T-cell (primary cell): ENCODE measurements at regions of chr5 and their contacts with region 1.

Region 1: DNA sequence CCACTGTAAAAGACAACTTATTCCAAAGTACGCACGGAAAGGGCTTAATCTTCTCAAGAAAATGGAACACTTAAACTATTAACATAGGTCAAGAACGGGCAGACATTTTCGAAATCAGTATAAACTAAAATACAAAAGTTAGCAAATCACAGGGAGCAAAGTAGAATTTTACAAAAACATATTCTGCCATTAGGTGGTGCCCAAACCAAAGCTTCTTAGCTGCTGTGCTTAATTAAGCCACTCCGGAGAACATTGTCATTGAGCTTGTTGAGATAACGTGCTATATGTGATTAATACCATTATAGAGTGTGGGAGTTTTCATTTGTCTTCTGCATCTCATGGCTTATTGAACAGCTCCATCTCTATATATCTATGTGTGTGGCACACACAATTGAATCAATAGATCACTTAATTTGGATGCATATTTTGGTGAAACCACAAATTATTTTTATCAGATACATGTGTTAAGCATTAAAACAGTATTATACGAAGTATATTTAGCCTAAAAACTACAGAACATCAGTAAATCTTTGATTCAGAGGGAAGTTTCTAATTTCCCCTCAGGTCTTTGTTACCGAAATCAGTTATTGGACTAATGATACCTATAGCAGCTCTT is 23.4 kb downstream of the UBLCP1 start:
- DNase-seq: peak in 4 of 35 experiments; percentile 5 to 63 (median 8)
- ATAC-seq: peak in 2 of 4 experiments; percentile 43 to 55
- H3K4me3 ChIP-seq: no peak overlapping the region
- H3K4me3 Mint-ChIP-seq: no peak overlapping the region
- H3K27ac ChIP-seq: no peak overlapping the region
- H3K27ac Mint-ChIP-seq: no peak overlapping the region
- H3K4me1 ChIP-seq: no peaks in the 10 kb centered on the region
- H3K4me1 Mint-ChIP-seq: no peaks in the 10 kb centered on the region
- H3K27me3 ChIP-seq: no peaks in the 10 kb centered on the region
- H3K27me3 Mint-ChIP-seq: no peaks in the 10 kb centered on the region

Region 2: GRCh38 chr5:159098603-159099436 is 187.7 kb before region 1 on chr5:
- CTCF ChIA-PET with region 1: no interaction called
- POLR2A ChIA-PET with region 1: no interaction called
- DNase-seq: peak in 10 of 35 experiments; percentile 22 to 65 (median 38)
- ATAC-seq: peak; percentile 51 to 54 (median 53)
- H3K4me3 ChIP-seq: peak overlapping the region; percentile 56 to 67
- H3K4me3 Mint-ChIP-seq: peak overlapping the region; percentile 84 to 91 (median 86)
- H3K27ac ChIP-seq: no peak overlapping the region
- H3K27ac Mint-ChIP-seq: peak overlapping the region in 1 of 2 donors; percentile 61
- H3K4me1 ChIP-seq: peaks cover 9 to 42% of the 10 kb centered on the region in 2 experiments
- H3K4me1 Mint-ChIP-seq: peaks cover 37 to 55% (median 45%) of the 10 kb centered on the region in 3 donors
- H3K27me3 ChIP-seq: peaks cover 0 to 58% of the 10 kb centered on the region in 2 experiments
- H3K27me3 Mint-ChIP-seq: peaks cover 34 to 72% of the 10 kb centered on the region in 2 donors

Region 3: GRCh38 chr5:159956074-159956473 is 669.5 kb after region 1 on chr5:
- CTCF ChIA-PET with region 1: no interaction called
- POLR2A ChIA-PET with region 1: interaction called in 1 of 2 experiments, 23 read pairs
- DNase-seq: no peak
- ATAC-seq: no peak
- H3K4me3 ChIP-seq: no peak overlapping the region
- H3K4me3 Mint-ChIP-seq: no peak overlapping the region
- H3K27ac ChIP-seq: no peak overlapping the region
- H3K27ac Mint-ChIP-seq: no peak overlapping the region
- H3K4me1 ChIP-seq: no peaks in the 10 kb centered on the region
- H3K4me1 Mint-ChIP-seq: no peaks in the 10 kb centered on the region
- H3K27me3 ChIP-seq: peaks cover 0 to 8% of the 10 kb centered on the region in 2 experiments
- H3K27me3 Mint-ChIP-seq: peaks cover 3 to 7% of the 10 kb centered on the region in 2 donors

Region 4: GRCh38 chr5:159987031-159987674 is 700.6 kb after region 1 on chr5:
- CTCF ChIA-PET with region 1: interaction called, 8 to 28 read pairs
- POLR2A ChIA-PET with region 1: interaction called in 1 of 2 experiments, 3 read pairs
- DNase-seq: peak; percentile 31 to 81 (median 61)
- ATAC-seq: peak; percentile 92 to 97 (median 95)
- H3K4me3 ChIP-seq: peak overlapping the region; percentile 38 to 64
- H3K4me3 Mint-ChIP-seq: peak overlapping the region; percentile 61 to 70 (median 69)
- H3K27ac ChIP-seq: no peak overlapping the region
- H3K27ac Mint-ChIP-seq: no peak overlapping the region
- H3K4me1 ChIP-seq: peaks cover 0 to 10% of the 10 kb centered on the region in 2 experiments
- H3K4me1 Mint-ChIP-seq: peaks cover 0 to 6% (median 4%) of the 10 kb centered on the region in 3 donors
- H3K27me3 ChIP-seq: peaks cover 0 to 22% of the 10 kb centered on the region in 2 experiments
- H3K27me3 Mint-ChIP-seq: peaks cover 21 to 35% of the 10 kb centered on the region in 2 donors